ENCODE measurements at regions of chr1 and their contacts with region 1.

Region 1: DNA sequence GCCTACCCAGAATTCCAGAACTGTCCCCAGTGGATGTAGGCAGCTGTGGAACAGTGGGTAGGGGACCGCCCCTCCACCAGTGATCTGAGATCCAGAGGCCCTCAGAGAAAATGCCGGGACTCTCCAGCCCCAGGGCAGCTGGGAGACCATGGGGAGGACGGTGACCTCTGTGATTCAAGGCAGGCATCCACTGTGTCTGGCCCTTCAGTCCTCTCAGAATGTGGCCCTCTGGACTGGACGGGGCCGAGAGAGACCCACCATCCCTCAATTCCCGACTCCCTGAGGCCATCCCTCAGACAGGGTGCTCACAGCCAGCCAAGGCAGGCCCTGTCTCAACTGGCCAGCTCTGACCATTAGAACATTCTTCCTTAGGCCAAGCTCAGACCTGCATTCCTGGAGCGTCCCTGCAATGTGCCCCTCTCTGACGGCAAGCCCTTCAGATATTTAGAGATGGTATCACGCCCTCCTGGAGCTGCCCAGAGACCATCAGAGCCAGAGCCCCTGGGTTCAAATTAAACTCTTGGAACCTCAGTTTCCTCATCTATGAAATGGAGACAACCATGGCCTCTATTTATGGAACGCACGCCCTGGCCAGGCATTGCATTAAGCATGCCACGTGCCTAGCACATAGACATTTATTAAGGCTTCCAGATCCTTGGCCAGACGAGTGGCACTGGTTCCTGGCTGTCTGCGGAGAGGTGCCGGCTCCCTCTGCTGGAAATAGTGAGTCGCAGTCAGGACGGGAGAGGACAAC is 9.6 kb upstream of the EPS8L3 start:
- DNase-seq: peak; percentile 86 to 96
- H3K4me3 ChIP-seq: no peak overlapping the region
- CTCF ChIP-seq: peak in 1 of 3 donors; percentile 74
- POLR2A ChIP-seq: no peak

Region 2: GRCh38 chr1:109548321-109549267 is 224.7 kb before region 1 on chr1 and contains the start of gene GNAI3:
- intact Hi-C with region 1: loop called (anchors 5 kb)
- DNase-seq: peak; percentile 98 to 100
- H3K4me3 ChIP-seq: peak within 1 kb of the TSS; percentile 83
- CTCF ChIP-seq: no peak
- POLR2A ChIP-seq: peak in 1 of 2 donors; percentile 80
- total RNA-seq, gene GNAI3: 8.5 to 13.2 (median 10.7) TPM

Region 3: DNA sequence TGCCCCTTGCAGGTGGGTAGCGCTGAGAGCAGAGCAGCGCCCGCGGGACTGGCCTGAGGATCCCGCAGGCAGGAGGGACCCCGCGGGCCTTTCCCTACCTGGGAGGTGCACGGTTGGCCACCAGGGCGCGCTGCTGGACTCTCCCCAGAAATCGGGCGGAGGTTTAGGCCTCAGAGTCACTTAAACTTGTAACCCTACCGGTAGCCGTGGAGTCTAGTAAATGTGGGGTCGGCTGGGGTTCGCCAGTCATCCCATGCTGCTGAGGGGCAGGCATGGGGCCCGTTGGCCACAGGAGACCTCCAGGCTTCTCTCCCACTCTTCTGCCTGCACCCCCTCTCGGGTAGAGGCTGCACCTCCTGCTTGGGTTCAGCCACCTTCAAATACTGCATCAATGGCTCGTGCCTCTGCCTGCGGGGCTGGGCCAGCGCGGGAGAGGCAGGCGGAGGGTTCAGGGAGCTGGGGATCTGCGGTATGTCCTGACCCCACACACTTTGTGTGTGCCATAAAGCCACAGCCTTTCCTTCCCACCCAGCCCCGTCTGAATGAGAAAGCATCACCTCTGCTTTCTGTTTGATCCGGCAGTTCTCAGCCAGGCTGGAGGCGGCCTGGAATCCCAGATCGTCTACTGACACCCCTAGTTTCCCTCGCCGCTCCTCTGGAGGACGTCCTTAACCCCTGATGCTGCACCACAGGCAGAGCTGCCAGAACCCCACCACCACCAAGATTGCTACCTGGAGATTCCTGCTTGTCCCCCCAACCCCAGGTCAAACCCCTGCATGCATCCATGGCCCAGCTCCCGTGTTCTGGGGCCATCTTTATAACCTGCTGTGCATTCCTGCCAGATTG is 129.7 kb before region 1 on chr1:
- intact Hi-C with region 1: loop called (anchors 5 kb)
- DNase-seq: peak; percentile 73 to 96
- H3K4me3 ChIP-seq: no peak overlapping the region
- CTCF ChIP-seq: peak in 1 of 3 donors; percentile 54
- POLR2A ChIP-seq: no peak

Region 4: GRCh38 chr1:109984456-109985275 is 211.3 kb after region 1 on chr1 and contains the start of gene AHCYL1:
- intact Hi-C with region 1: loop called (anchors 2 kb)
- DNase-seq: peak; percentile 100
- H3K4me3 ChIP-seq: peak within 1 kb of the TSS; percentile 79
- CTCF ChIP-seq: peak in 1 of 3 donors; percentile 99
- POLR2A ChIP-seq: peak in 1 of 2 donors; percentile 91
- total RNA-seq, gene AHCYL1: 42.3 to 54.4 (median 47.8) TPM

Measured in lower leg skin (tissue), 4 donors.